HEK293T (cell line): ENCODE measurements at regions of chr4 and their contacts with region 1.

Region 1: DNA sequence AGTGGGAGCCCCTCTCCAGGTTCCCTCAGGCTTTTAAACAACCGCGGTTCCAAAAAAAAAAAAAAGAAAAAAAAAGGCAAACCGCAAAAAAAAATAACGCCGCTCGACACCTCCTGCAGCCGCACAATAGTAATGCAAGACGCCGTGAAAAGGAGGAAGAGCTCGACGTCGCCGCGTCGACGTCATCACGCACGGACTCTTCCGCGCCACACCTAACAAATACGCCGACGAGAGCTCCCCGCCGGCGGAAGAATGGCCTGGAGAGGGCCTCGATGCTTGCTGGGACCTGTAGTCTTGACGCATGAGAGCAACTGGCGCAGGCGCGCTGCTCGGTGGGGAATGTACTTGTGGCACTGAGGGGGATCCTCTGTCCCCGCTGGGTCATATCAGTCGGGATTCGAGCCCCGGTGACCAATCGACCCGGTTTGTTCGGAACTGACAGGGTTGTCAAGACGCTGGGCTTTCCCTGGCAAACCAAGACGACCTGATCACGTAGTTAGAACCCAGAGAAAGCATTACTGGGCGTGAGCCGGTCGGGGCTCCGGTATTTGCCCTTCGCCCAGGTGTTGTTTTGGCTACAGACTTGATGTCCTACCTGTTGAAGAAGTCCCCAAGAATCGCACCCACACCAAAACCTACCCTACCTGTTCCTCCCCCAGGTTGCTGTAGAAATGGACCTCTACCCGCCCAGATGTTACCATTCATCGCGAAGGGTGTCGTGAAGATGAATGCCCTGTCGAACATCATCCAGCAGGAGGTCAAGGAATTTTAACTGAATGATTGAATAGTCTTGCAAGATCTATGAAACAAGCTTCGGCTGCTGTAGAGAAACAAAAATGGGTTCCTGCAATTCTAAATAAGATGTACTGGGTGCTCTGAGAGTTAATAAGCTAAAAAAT is at the start of gene CBR4:
- DNase-seq: peak; percentile 92

Region 2: GRCh38 chr4:168900080-168900479 is 110.3 kb before region 1 on chr4:
- CTCF ChIA-PET with region 1: no interaction called
- POLR2A ChIA-PET with region 1: no interaction called
- DNase-seq: no peak

Region 3: DNA sequence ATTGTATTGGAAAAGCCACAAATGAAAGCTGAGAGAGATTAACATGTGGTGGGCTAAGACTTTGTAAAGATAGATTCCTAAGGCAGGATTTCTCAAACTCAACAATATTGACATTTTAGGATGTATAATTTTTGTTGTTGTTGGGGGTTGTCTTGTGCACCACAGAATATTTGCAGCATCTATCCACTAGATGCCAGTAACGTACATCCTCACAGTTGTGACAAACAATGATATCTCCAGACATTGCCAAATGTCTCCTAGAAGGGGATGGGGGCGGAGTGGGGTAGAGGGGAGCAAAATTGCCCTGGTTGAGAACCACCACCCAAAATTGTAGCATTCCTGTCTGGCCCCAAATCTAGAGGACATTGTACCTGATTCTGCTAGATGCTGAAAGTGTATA is 14.4 kb after region 1 on chr4:
- CTCF ChIA-PET with region 1: interaction called, 8 read pairs
- POLR2A ChIA-PET with region 1: interaction called, 16 read pairs
- DNase-seq: peak; percentile 36

Region 4: GRCh38 chr4:169201222-169202144 is 191.1 kb after region 1 on chr4:
- CTCF ChIA-PET with region 1: interaction called, 10 read pairs
- POLR2A ChIA-PET with region 1: no interaction called
- DNase-seq: no peak

Region 5: GRCh38 chr4:169270810-169271691 is 260.7 kb after region 1 on chr4 and contains the start of gene SH3RF1:
- CTCF ChIA-PET with region 1: no interaction called
- POLR2A ChIA-PET with region 1: interaction called, 20 read pairs
- DNase-seq: peak; percentile 72

Region 6: DNA sequence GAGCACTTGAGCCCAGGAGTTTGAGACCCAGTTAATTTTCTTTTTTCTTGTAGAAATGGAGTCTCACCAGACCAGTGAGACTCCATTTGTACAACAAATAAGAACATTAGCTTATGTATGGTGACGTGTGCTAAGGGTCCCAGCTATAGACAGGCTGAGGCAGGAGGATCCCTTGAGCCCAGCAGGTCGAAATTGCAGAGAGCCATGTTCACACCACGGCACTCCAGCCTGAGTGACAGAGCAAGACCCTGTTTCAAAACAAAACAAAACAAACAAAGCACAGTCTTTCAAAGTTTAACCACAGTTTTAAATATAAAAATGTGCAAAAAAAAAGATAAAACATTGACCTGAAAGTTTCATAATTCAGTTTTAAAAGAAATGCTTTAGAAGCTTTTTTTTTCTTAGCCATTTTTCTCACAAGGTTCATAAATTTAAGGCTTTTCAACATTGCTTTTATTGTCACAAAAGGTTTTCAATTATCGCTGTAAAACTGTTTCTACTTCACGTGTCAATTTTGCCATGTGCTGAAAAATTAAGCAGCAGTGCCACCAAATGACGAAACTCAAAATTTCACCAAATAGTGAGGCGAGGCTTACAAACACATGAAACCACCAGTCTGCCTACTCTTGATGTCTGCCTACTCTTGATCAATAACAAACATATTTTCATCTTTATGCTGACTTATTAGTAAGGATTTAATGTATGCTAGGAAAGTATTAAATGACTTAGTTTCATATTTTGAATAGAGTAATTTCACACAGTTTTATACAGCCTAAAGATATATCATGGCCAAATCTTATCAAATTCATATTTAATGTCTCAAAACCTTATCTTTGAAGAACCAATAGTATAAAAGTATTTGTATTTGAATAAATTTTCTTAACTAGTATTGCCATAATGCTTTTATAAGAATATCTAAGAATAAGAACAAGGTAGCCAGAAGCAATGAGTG is 475.7 kb after region 1 on chr4:
- CTCF ChIA-PET with region 1: interaction called, 3 read pairs
- POLR2A ChIA-PET with region 1: interaction called, 11 read pairs
- DNase-seq: peak; percentile 51

Region 7: GRCh38 chr4:169906104-169906503 is 895.7 kb after region 1 on chr4:
- CTCF ChIA-PET with region 1: no interaction called
- POLR2A ChIA-PET with region 1: no interaction called
- DNase-seq: no peak